Ovary (tissue), 10 donors: ENCODE measurements at regions of chr18 and their contacts with region 1.

Region 1: DNA sequence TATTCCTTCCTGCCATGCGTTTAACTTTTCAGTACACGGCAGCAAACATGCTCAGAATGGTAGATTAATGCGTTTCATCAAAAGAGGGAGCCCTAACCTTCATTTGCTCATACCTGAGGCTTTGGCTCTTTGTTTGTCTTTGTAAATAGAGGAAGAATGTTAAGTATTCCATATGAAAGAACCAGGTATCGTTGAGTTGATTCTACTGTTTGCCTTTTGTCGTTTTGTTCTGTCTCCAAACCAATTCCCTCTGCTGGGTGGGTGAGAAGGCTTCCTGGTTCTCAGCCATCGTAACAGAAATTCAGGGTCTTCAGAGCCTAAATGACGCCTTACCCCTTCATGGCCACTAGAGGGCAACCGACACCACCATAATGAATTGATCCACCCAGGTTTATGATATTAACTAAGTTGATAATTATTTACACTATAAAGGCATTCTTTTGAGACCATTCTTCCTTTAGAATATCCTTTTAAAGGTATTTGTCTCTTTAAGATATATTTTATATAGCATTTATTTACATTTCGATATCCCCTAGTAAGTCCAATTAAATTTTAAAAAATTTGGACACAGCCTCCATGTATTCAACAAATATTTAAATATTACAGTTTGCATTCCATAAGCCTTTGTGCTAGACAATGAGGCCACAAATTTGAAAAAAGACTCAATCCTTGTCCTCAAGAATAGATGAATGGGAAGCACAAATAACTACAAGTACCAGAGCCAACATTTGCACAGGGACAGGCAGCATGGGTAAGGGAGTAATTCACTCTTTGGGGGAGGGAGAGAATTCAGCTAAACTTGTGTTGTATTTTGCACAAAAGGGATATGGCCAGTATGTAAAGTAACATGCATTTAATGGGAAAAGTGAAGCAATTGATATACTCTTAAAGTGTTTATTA is 48.1 kb downstream of the TIMM21 start:
- DNase-seq: peak in 3 of 5 donors; percentile 39 to 67 (median 46)
- H3K4me3 ChIP-seq: peak overlapping the region; percentile 17
- H3K27ac ChIP-seq: peak overlapping the region in 1 of 2 donors; percentile 30
- H3K4me1 ChIP-seq: peaks cover 2% of the 10 kb centered on the region
- H3K27me3 ChIP-seq: no peaks in the 10 kb centered on the region
- CTCF ChIP-seq: peak; percentile 49 to 96 (median 93)
- EP300 ChIP-seq: no peak
- POLR2A ChIP-seq: no peak

Region 2: GRCh38 chr18:74337155-74337911 is 140.9 kb after region 1 on chr18:
- intact Hi-C with region 1: loop called in 3 of 4 experiments (anchors 2 to 5 kb)
- DNase-seq: no peak
- H3K4me3 ChIP-seq: no peak overlapping the region
- H3K27ac ChIP-seq: no peak overlapping the region
- H3K4me1 ChIP-seq: no peaks in the 10 kb centered on the region
- H3K27me3 ChIP-seq: no peaks in the 10 kb centered on the region
- CTCF ChIP-seq: no peak
- EP300 ChIP-seq: no peak
- POLR2A ChIP-seq: no peak

Region 3: DNA sequence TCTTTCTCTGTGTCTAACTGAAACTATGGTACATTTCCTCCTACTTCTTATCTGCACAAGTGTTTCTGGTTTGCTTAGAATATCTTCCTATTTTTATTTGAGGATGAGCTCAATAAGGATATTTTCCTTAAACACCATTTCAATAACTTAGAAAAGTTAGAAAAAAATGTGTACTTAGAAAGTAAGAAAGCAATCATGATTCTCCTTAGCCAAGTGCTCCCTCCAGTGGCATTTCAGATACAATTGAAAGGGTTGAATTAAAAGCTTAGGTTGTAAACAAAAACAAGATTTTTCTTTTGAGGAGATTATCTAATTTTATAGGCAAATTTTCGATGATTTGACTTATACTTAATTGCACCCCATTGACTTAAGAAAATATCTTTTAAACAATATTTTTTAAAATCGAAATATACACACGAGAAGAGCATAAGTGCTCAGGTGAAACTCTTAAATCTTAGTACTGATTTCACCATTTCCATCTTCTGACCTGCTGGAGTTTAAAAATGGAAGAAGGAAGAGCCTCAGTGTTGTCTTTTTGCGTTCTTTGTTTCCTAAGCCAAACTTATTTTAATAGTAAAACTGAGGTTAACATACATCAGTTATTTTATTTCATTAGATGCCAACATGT is 146.1 kb after region 1 on chr18:
- intact Hi-C with region 1: loop called (anchors 2 to 5 kb)
- DNase-seq: peak in 1 of 5 donors; percentile 47
- H3K4me3 ChIP-seq: no peak overlapping the region
- H3K27ac ChIP-seq: no peak overlapping the region
- H3K4me1 ChIP-seq: no peaks in the 10 kb centered on the region
- H3K27me3 ChIP-seq: no peaks in the 10 kb centered on the region
- CTCF ChIP-seq: peak; percentile 10 to 84 (median 59)
- EP300 ChIP-seq: no peak
- POLR2A ChIP-seq: no peak

Region 4: DNA sequence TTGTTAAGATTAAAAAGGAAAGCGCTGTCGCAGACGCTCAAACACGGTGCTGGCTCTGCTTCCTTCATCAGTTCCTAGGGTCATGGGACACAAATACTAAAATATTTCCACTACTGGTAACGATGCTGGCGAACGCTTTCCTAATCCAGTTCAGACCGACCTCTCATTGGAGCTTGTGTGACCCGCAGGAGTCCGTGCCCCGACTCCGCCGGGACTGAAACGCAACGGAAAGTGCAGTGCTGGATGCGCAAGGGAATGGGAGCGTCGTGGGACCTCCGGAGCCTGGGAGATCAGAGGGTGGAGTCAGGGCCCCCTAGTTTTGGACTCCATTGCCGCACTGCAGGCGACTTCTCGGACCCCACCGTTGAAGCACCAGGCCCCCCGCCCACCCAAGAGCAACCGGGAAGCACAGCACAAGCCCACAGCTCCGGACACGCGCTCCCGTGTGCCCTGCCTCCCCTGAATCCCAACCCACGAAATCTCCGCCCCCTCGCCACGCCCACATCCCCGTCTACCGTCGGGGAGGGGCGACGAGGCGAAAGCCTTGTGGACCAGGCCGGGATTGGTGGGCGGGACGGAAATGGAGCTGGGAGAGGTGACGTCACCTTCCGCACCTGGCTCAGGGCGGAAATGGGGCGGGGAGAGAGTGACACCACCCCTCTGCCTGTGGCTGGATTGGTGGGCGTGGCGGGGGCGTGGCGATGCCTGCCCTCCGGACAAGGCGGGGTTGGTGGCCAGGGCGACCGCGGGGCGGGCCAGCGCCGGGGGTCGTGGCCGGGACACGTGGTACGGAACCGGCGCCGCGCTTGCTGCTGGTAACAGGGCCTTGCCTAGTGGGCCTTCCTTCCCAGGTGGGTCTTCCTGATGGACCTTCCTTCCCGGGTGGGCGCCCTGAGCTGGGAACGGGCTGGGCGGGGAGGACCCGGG is 299.4 kb after region 1 on chr18 and contains the start of gene CNDP2:
- intact Hi-C with region 1: loop called in 1 of 4 experiments (anchors 5 kb)
- DNase-seq: peak; percentile 100
- H3K4me3 ChIP-seq: peak within 1 kb of the TSS; percentile 74
- H3K27ac ChIP-seq: peak within 1 kb of the TSS; percentile 27 to 89
- H3K4me1 ChIP-seq: peaks cover 4% of the 10 kb centered on the region
- H3K27me3 ChIP-seq: no peaks in the 10 kb centered on the region
- CTCF ChIP-seq: no peak
- EP300 ChIP-seq: peak; percentile 11
- POLR2A ChIP-seq: peak; percentile 81
- total RNA-seq, gene CNDP2: 28.1 to 119 (median 91.7) TPM

Region 5: GRCh38 chr18:74551936-74552555 is 355.6 kb after region 1 on chr18:
- intact Hi-C with region 1: loop called in 1 of 4 experiments (anchors 10 kb)
- DNase-seq: peak; percentile 51 to 76 (median 69)
- H3K4me3 ChIP-seq: no peak overlapping the region
- H3K27ac ChIP-seq: no peak overlapping the region
- H3K4me1 ChIP-seq: peaks cover 2% of the 10 kb centered on the region
- H3K27me3 ChIP-seq: no peaks in the 10 kb centered on the region
- CTCF ChIP-seq: peak in 2 of 3 donors; percentile 30 to 46
- EP300 ChIP-seq: no peak
- POLR2A ChIP-seq: no peak